RWPE1 (cell line): ENCODE measurements at regions of chr22 and their contacts with region 1.

Region 1: GRCh38 chr22:22959147-22959827 is 71.7 kb downstream of the IGLL5 start:
- DNase-seq: peak; percentile 54
- H3K27ac ChIP-seq: no peak overlapping the region
- CTCF ChIP-seq: peak; percentile 91

Region 2: DNA sequence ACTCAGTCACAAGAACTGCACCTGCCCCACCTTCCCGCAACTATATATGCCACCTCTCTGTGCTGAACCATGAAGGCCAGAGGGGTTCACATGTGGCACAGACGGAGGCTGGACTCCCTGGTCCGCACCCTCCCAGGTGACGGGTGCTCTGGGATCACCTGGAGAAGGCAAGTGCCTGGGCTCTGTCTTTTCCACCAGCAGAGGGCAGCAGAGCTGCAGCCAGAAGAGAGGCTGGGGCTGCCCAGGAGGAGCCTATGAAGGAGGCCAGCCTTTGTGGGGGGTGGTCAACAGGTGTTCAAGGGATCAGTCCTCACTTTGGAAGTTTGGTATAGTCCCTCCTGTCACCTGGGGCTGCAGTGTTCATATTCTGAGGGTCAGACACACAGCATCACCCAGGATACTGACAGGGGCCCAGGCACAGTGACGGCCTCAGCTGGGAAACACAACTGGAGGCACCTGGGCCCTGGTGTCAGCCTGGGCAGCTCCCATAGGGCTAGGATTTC is 110.9 kb before region 1 on chr22:
- CTCF ChIA-PET with region 1: interaction called, 16 read pairs
- POLR2A ChIA-PET with region 1: no interaction called
- DNase-seq: peak; percentile 24
- H3K27ac ChIP-seq: no peak overlapping the region
- CTCF ChIP-seq: peak; percentile 90

Region 3: DNA sequence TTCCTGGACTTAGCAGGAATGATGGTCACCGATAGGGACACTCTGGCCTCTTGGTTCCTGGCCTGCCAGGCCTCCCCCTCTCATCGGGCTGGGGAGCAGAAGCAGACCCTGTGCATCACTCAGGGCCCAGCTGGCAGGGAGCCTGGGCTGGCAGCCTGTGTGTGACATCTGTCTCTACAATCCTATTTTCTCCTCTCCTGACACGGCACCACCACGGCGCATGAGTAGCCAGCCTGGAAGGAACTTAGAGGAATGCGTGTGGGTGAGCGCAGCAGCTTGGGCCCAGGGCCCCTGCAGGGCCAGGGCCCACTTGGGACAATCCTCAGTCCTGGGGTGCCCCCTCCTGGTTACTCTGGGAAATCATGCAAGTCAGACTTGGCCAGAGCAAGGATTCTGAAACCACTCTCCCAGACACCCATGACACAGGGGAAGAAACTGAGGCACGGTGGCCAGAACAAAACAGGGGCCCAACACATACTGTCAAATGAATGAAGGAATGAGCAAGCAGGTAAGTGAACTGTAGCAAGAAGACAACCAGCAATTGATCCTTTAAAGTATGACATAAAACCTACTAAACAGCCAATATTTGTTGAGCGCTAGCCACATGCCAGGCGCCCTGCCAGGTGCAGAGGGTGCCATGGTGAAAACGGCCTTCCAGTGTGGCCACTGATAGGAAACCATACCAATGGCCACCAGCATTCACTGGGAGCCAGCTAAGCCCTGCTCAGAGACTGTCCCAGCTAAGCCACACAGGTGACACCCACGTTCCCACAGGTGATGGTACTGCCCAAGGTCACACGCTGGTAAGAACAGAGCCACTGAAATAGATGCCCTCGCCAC is 169.2 kb after region 1 on chr22:
- CTCF ChIA-PET with region 1: interaction called, 31 read pairs
- POLR2A ChIA-PET with region 1: no interaction called
- DNase-seq: peak; percentile 38
- H3K27ac ChIP-seq: no peak overlapping the region
- CTCF ChIP-seq: peak; percentile 53

Region 4: GRCh38 chr22:23385291-23386244 is 426.3 kb after region 1 on chr22:
- CTCF ChIA-PET with region 1: interaction called, 12 read pairs
- POLR2A ChIA-PET with region 1: no interaction called
- DNase-seq: peak; percentile 74
- H3K27ac ChIP-seq: no peak overlapping the region
- CTCF ChIP-seq: peak; percentile 96